ENCODE measurements at regions of chr4 and their contacts with region 1.

Region 1: GRCh38 chr4:52983563-52984303 is 121.6 kb downstream of the RASL11B start:
- DNase-seq: peak in 1 of 7 donors; percentile 27
- H3K4me3 ChIP-seq: no peak overlapping the region
- H3K27ac ChIP-seq: peak overlapping the region in 2 of 5 donors; percentile 3 to 17
- H3K4me1 ChIP-seq: peaks cover 15 to 36% of the 10 kb centered on the region in 2 donors
- H3K27me3 ChIP-seq: no peaks in the 10 kb centered on the region
- CTCF ChIP-seq: peak; percentile 62 to 76 (median 72)
- POLR2A ChIP-seq: no peak

Region 2: DNA sequence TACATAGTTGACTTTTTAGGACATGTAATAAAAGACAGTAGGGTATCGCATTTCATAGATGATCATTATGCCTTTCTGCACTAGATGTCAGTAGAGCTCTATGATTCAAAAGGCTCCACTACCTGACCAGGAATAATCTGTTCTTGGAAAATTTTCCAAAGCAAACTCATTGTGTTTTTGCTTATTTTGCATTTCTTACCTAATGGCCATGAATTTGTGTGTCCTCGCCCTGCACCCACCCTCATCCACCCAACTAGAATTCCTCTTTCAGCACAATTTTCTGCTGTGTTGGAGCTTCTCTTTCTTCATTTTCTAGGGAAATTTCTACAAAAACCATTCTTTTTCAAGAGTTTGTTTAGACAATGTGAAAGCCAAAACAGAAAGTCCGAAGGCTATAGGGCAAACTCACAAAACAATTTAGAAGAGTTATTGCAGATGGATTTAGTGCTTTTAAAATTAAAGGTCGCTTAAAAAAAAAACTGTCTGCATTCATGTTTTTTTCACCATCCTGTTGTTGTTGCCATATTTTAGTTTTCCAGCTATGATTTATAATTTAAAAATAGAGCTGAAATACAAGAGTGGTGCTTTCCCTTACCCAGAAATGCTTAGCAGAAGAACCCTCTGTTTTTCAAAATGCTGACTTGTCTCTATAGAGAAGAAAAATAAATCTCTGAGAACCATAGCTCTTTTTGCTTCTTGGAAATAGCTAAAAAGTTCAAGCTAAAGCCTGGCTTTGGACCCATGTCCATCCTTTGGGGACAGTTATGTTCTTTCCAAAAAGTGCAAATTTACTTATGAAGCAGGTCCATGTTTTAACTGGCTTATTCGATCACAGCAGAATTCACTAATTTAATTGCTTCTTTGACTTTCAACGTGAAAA is 748.9 kb before region 1 on chr4:
- intact Hi-C with region 1: loop called in 1 of 2 experiments (anchors 5 kb)
- DNase-seq: peak in 4 of 7 donors; percentile 2 to 53 (median 20)
- H3K4me3 ChIP-seq: no peak overlapping the region
- H3K27ac ChIP-seq: no peak overlapping the region
- H3K4me1 ChIP-seq: no peaks in the 10 kb centered on the region
- H3K27me3 ChIP-seq: no peaks in the 10 kb centered on the region
- CTCF ChIP-seq: peak; percentile 35 to 78 (median 64)
- POLR2A ChIP-seq: no peak

Region 3: GRCh38 chr4:52376132-52376704 is 607.5 kb before region 1 on chr4:
- intact Hi-C with region 1: loop called (anchors 5 to 10 kb)
- DNase-seq: peak in 5 of 7 donors; percentile 23 to 57 (median 49)
- H3K4me3 ChIP-seq: no peak overlapping the region
- H3K27ac ChIP-seq: no peak overlapping the region
- H3K4me1 ChIP-seq: no peaks in the 10 kb centered on the region
- H3K27me3 ChIP-seq: no peaks in the 10 kb centered on the region
- CTCF ChIP-seq: peak; percentile 59 to 82 (median 71)
- POLR2A ChIP-seq: no peak

Region 4: GRCh38 chr4:52545099-52546069 is 438.3 kb before region 1 on chr4:
- intact Hi-C with region 1: loop called (anchors 2 to 10 kb)
- DNase-seq: peak; percentile 73 to 91 (median 86)
- H3K4me3 ChIP-seq: peak overlapping the region in 1 of 4 donors; percentile 45
- H3K27ac ChIP-seq: no peak overlapping the region
- H3K4me1 ChIP-seq: peaks cover 0 to 4% of the 10 kb centered on the region in 2 donors
- H3K27me3 ChIP-seq: no peaks in the 10 kb centered on the region
- CTCF ChIP-seq: peak; percentile 84 to 95 (median 92)
- POLR2A ChIP-seq: no peak

Region 5: GRCh38 chr4:52728691-52729240 is 255.0 kb before region 1 on chr4:
- intact Hi-C with region 1: loop called in 1 of 2 experiments (anchors 10 kb)
- DNase-seq: no peak
- H3K4me3 ChIP-seq: no peak overlapping the region
- H3K27ac ChIP-seq: no peak overlapping the region
- H3K4me1 ChIP-seq: no peaks in the 10 kb centered on the region
- H3K27me3 ChIP-seq: no peaks in the 10 kb centered on the region
- CTCF ChIP-seq: no peak
- POLR2A ChIP-seq: no peak

Region 6: GRCh38 chr4:53490965-53491622 is 507.4 kb after region 1 on chr4:
- intact Hi-C with region 1: no loop called
- DNase-seq: peak in 6 of 7 donors; percentile 49 to 87 (median 72)
- H3K4me3 ChIP-seq: no peak overlapping the region
- H3K27ac ChIP-seq: peak overlapping the region in 2 of 5 donors; percentile 39 to 43
- H3K4me1 ChIP-seq: peaks cover 6 to 26% of the 10 kb centered on the region in 2 donors
- H3K27me3 ChIP-seq: no peaks in the 10 kb centered on the region
- CTCF ChIP-seq: peak; percentile 40 to 90 (median 74)
- POLR2A ChIP-seq: no peak

Region 7: GRCh38 chr4:54440394-54441136 is 1456.8 kb after region 1 on chr4:
- intact Hi-C with region 1: no loop called
- DNase-seq: peak in 4 of 7 donors; percentile 10 to 28 (median 25)
- H3K4me3 ChIP-seq: peak overlapping the region in 1 of 4 donors; percentile 21
- H3K27ac ChIP-seq: no peak overlapping the region
- H3K4me1 ChIP-seq: no peaks in the 10 kb centered on the region
- H3K27me3 ChIP-seq: no peaks in the 10 kb centered on the region
- CTCF ChIP-seq: peak; percentile 33 to 64 (median 60)
- POLR2A ChIP-seq: no peak

Measured in adrenal gland (tissue), 19 donors.